HCT116 (cell line): ENCODE measurements at regions of chr2 and their contacts with region 1.

Region 1: DNA sequence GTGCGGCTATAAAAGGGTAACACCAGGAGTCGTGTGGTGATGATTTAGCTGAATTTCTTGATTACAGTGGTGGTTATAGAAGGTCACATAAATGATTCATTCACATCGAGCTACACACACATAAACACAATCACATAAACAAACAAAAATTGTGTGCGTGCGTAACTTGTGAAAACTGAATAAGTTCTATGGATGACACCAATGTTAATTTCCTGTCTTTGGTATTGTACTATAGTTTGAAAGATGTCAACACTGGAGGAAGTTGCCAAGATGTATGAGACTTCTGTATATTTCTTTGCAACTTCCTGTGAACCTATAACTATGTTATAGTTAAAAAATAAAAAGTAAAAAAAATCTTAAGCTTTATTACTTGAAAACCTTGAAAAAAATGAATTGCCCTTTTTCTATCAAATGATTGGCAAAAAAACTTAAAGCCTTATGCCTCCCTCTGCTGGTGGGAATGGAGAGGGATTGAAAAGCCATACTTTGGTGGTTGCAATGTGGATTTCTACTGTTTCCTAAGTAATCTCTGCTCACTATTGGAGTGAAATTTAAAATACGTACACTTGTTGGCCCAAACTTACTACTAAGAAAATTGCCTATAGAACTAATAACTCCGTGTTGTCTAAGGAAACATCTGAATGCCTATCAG is 227.7 kb downstream of the RPIA start:
- DNase-seq: no peak
- ATAC-seq: peak; percentile 63; the same call in 1 of the 2 replicates
- H3K4me3 ChIP-seq: no peak overlapping the region
- H3K27ac ChIP-seq: no peak overlapping the region
- H3K4me1 ChIP-seq: no peaks in the 10 kb centered on the region
- H3K27me3 ChIP-seq: peaks cover 38% of the 10 kb centered on the region
- CTCF ChIP-seq: peak; percentile 45 to 75 (median 66); a peak in 4 of 6 replicates
- POLR2A ChIP-seq: no peak
- RAD21 ChIP-seq: peak; percentile 43; the same call in 1 of the 2 replicates

Region 2: GRCh38 chr2:88933980-88934379 is 14.8 kb after region 1 on chr2:
- CTCF ChIA-PET with region 1: interaction called, 10 read pairs
- POLR2A ChIA-PET with region 1: no interaction called
- RAD21 ChIA-PET with region 1: no interaction called
- intact Hi-C with region 1: no loop called
- DNase-seq: no peak
- ATAC-seq: peak; percentile 58
- H3K4me3 ChIP-seq: no peak overlapping the region
- H3K27ac ChIP-seq: no peak overlapping the region
- H3K4me1 ChIP-seq: no peaks in the 10 kb centered on the region
- H3K27me3 ChIP-seq: peaks cover 20% of the 10 kb centered on the region
- CTCF ChIP-seq: peak in 2 of 3 experiments; percentile 24 to 28; a peak in 1 of 6 replicates
- POLR2A ChIP-seq: no peak
- RAD21 ChIP-seq: no peak

Region 3: GRCh38 chr2:88942798-88943197 is 23.6 kb after region 1 on chr2:
- CTCF ChIA-PET with region 1: interaction called, 6 read pairs
- POLR2A ChIA-PET with region 1: no interaction called
- RAD21 ChIA-PET with region 1: no interaction called
- intact Hi-C with region 1: loop called (anchors 2 kb)
- DNase-seq: no peak
- ATAC-seq: no peak
- H3K4me3 ChIP-seq: no peak overlapping the region
- H3K27ac ChIP-seq: no peak overlapping the region
- H3K4me1 ChIP-seq: no peaks in the 10 kb centered on the region
- H3K27me3 ChIP-seq: peaks cover 11% of the 10 kb centered on the region
- CTCF ChIP-seq: no peak
- POLR2A ChIP-seq: no peak
- RAD21 ChIP-seq: no peak